PC-9 (cell line): ENCODE measurements at regions of chr11 and their contacts with region 1.

Region 1: DNA sequence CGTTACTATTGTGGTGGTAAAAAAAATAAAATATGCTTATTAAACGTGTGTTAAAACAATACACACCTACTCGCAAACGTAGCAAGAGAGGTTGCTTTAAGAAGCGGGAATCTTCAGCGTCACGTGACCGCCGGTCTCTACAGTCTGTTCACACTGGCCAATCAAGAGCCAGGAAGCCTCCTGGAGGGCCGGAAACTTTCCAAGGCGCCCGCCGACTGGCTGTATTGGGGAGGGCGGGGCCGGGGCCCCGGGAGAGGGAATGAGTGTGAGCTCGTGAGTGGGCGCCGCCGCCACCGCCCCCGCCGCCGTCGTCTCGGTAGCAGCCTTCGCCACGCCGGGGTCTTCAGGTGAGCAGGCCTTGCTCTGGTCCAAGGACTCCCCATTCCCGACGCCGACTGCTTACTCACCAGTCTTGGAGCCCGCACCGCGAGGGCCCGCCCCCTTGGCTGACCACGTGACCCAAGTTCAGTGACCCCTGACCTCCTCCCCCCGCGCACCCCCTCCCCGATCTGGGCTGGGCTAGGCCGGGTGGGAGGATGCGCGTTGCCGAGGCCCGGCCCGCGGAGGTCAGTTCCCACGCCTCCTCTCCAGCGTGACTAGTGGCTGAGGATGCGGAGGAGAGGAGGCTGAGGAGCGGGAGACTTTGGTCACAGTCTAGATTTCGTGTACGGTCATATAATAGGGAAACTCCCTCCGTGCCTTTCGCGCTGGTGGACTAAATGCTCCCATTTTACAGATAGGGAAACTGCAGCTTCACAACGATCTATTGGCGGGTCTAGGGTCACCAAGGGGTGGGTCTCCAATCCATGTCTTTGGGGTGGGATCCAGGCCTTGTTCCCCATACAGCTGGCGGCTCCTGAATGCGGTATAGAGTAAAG is at the start of gene TAF6L:
- DNase-seq: peak; percentile 95 to 97
- H3K4me3 ChIP-seq: peak within 1 kb of the TSS; percentile 59
- H3K27ac ChIP-seq: peak within 1 kb of the TSS; percentile 77
- H3K4me1 ChIP-seq: peaks cover 14% of the 10 kb centered on the region
- H3K27me3 ChIP-seq: no peaks in the 10 kb centered on the region
- CTCF ChIP-seq: no peak
- total RNA-seq, gene TAF6L: 31.2 and 36.4 TPM in 2 replicates

Region 2: DNA sequence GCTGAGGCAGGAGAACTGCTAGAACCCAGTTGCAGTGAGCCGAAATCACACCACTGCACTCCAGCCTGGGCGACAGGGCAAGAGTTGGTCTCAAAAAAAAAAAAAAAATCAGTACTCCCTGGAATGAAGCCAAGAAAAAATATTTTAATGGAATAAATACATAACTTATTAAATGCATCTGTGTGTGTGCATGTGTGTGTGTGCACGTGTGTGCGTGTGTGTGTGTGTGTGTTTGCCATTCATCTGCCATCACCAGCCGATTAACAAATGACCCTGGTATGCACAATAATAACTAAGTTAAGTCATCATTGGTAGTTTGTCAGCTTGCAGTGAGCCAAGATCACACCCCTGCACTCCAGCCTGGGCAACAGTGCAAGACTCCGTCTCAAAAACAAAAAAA is 387.6 kb before region 1 on chr11:
- CTCF ChIA-PET with region 1: interaction called, 7 read pairs
- POLR2A ChIA-PET with region 1: no interaction called
- intact Hi-C with region 1: loop called (anchors 1 kb)
- DNase-seq: no peak
- H3K4me3 ChIP-seq: no peak overlapping the region
- H3K27ac ChIP-seq: no peak overlapping the region
- H3K4me1 ChIP-seq: no peaks in the 10 kb centered on the region; the same call in none of the 2 replicates
- H3K27me3 ChIP-seq: no peaks in the 10 kb centered on the region
- CTCF ChIP-seq: no peak

Region 3: DNA sequence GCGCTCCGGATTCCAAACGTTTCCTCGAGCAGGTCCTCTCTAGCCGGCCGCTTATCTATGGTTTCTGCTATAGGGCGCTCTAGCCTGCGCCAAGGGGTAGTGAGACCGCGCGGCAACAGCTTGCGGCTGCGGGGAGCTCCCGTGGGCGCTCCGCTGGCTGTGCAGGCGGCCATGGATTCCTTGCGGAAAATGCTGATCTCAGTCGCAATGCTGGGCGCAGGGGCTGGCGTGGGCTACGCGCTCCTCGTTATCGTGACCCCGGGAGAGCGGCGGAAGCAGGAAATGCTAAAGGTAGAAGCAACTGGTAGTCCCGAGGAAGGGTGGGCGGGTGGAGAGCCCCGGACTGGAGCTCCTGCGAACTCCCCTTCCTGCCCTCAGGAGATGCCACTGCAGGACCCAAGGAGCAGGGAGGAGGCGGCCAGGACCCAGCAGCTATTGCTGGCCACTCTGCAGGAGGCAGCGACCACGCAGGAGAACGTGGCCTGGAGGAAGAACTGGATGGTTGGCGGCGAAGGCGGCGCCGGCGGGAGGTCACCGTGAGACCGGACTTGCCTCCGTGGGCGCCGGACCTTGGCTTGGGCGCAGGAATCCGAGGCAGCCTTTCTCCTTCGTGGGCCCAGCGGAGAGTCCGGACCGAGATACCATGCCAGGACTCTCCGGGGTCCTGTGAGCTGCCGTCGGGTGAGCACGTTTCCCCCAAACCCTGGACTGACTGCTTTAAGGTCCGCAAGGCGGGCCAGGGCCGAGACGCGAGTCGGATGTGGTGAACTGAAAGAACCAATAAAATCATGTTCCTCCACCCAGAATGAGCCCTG is 99.6 kb before region 1 on chr11 and contains the starts of genes LBHD1 and UQCC3:
- CTCF ChIA-PET with region 1: interaction called, 8 read pairs
- POLR2A ChIA-PET with region 1: interaction called, 4 read pairs
- intact Hi-C with region 1: loop called (anchors 10 kb)
- DNase-seq: peak; percentile 75 to 80
- H3K4me3 ChIP-seq: peak within 1 kb of the TSS; percentile 79
- H3K27ac ChIP-seq: peak within 1 kb of the TSS; percentile 79
- H3K4me1 ChIP-seq: peaks cover 46% of the 10 kb centered on the region
- H3K27me3 ChIP-seq: no peaks in the 10 kb centered on the region
- CTCF ChIP-seq: no peak
- total RNA-seq, gene LBHD1: 13.2 and 16.1 TPM in 2 replicates
- total RNA-seq, gene UQCC3: 16.1 and 25.4 TPM in 2 replicates

Region 4: DNA sequence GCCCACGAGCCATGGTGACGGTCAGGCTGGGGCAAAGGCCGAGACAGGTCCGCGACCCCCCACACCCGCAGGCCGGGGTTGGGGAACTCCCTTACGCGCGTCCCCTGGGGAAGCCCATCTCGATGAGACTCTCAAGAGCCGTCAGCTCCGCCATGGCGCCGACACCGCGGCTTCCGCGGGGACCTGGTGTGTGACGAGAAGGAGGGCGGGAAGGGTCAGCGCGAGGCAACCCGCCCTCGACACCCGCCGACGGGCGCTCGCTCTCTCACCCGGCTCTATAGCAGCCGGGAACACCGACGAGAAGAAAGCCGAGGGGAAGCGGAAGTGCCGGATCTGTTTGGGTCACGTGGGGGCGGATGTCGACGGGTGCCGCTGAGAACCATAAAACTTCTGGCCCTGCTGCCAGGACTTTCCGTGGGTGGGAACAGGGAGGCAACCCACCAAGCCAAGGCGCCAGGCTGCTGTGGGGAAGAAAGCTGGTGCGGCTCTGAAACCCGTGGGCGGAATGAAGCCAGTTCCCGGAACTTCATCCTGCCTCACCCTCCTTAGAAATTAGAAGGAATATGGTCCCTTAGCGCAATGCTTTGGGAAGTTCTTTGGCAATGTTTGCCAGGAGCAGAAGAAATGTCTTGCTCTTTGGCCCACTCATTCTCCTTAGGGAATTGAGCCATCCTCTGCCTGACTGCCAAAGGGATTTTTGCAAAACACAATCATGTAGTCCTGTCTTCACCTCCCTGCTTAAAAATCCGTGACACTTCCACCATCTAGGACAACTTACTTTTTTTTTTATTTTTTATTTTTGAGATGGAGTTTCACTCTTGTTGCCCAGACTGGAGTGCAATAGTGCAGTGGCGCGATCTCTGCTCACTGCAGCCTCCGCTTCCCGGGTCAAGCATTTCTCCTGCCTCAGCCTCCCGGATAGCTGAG is 92.3 kb before region 1 on chr11 and contains the start of gene UBXN1:
- CTCF ChIA-PET with region 1: interaction called, 8 read pairs
- POLR2A ChIA-PET with region 1: interaction called, 13 read pairs
- intact Hi-C with region 1: loop called (anchors 10 kb)
- DNase-seq: peak; percentile 78 to 80
- H3K4me3 ChIP-seq: peak within 1 kb of the TSS; percentile 76
- H3K27ac ChIP-seq: peak within 1 kb of the TSS; percentile 37
- H3K4me1 ChIP-seq: peaks cover 29% of the 10 kb centered on the region
- H3K27me3 ChIP-seq: no peaks in the 10 kb centered on the region
- CTCF ChIP-seq: no peak
- total RNA-seq, gene UBXN1: 143 and 150 TPM in 2 replicates

Region 5: GRCh38 chr11:62753736-62754603 is 17.4 kb before region 1 on chr11 and contains the start of gene ZBTB3:
- CTCF ChIA-PET with region 1: interaction called, 5 read pairs
- POLR2A ChIA-PET with region 1: interaction called, 38 read pairs
- intact Hi-C with region 1: no loop called
- DNase-seq: peak; percentile 98
- H3K4me3 ChIP-seq: peak within 1 kb of the TSS; percentile 63
- H3K27ac ChIP-seq: peak within 1 kb of the TSS; percentile 46
- H3K4me1 ChIP-seq: peaks cover 17% of the 10 kb centered on the region
- H3K27me3 ChIP-seq: no peaks in the 10 kb centered on the region
- CTCF ChIP-seq: no peak
- total RNA-seq, gene ZBTB3: 16.5 and 17.2 TPM in 2 replicates

Region 6: GRCh38 chr11:62921787-62922589 is 150.6 kb after region 1 on chr11:
- CTCF ChIA-PET with region 1: interaction called, 15 read pairs
- POLR2A ChIA-PET with region 1: no interaction called
- intact Hi-C with region 1: no loop called
- DNase-seq: peak in 1 of 2 experiments; percentile 44
- H3K4me3 ChIP-seq: no peak overlapping the region
- H3K27ac ChIP-seq: no peak overlapping the region
- H3K4me1 ChIP-seq: no peaks in the 10 kb centered on the region
- H3K27me3 ChIP-seq: peaks cover 84% of the 10 kb centered on the region
- CTCF ChIP-seq: no peak

Region 7: DNA sequence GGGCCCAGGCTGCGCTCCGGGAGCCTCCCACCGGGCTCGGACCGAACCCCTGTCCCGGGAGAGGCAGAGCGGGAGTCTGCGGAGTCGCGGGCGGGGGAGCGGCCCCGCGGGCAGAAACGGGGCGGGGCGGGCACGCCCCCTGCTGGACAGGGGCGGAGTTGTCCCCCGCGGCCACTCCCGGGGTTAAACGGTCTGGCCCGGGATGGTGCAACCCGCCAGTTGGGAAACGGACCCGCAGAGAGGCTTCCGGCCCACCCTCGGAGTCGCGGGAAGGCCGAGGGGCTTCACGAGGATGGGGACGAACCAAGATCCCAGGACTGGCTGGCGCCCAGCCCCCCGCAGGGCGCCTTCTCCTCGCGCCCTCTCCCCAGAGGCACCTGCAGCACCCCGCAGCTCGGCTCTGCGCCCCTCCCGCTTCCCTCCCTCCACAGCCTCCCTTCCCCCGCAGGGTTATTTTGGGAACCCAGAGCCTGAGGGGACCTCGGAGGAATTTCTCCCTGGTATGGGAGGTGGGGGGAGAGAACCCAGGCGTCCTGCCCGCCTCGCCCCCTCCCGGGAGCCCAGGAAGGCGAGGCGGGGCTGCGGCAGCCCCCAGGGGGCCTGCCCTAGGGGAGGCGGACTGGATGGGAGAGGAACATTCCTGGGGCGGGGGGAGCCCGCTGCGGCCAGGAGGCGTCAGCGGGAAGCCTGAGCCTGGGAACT is 1971.7 kb after region 1 on chr11:
- CTCF ChIA-PET with region 1: no interaction called
- POLR2A ChIA-PET with region 1: interaction called, 13 read pairs
- intact Hi-C with region 1: no loop called
- DNase-seq: peak in 1 of 2 experiments; percentile 83
- H3K4me3 ChIP-seq: peak overlapping the region; percentile 64
- H3K27ac ChIP-seq: no peak overlapping the region
- H3K4me1 ChIP-seq: peaks cover 13% of the 10 kb centered on the region
- H3K27me3 ChIP-seq: peaks cover 51% of the 10 kb centered on the region
- CTCF ChIP-seq: peak; percentile 93